ENCODE measurements at regions of chr12 and their contacts with region 1.

Region 1: GRCh38 chr12:77010691-77011548 is 54.4 kb downstream of the E2F7 start:
- DNase-seq: peak; percentile 72 to 86
- H3K4me3 ChIP-seq: no peak overlapping the region
- H3K4me1 ChIP-seq: no peaks in the 10 kb centered on the region
- H3K27me3 ChIP-seq: peaks cover 3% of the 10 kb centered on the region; the same call in 1 of the 2 replicates

Region 2: DNA sequence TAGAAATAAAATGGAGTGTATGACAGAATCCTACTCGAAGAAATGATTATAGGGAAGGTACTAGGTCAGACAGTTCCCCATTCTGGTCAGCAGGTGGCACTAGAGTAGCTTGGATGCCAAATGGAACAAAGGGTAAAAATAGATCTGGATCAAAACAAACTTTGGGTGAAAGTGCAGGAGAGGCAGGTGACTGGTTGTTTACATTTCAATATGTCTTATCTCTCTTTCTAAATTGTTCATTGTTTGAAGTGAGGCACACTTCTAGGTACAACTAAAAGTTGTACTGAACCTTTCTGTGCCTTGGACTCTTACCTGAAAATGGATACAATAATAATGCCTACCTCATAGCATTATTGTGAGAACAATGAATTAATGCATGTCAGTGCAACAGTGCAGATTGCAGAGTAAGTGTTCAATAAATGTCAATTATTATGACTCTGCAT is 389.3 kb before region 1 on chr12:
- in situ Hi-C with region 1: loop called (anchors 25 kb)
- DNase-seq: peak; percentile 77 to 78
- H3K4me3 ChIP-seq: no peak overlapping the region
- H3K4me1 ChIP-seq: no peaks in the 10 kb centered on the region
- H3K27me3 ChIP-seq: no peaks in the 10 kb centered on the region

Region 3: DNA sequence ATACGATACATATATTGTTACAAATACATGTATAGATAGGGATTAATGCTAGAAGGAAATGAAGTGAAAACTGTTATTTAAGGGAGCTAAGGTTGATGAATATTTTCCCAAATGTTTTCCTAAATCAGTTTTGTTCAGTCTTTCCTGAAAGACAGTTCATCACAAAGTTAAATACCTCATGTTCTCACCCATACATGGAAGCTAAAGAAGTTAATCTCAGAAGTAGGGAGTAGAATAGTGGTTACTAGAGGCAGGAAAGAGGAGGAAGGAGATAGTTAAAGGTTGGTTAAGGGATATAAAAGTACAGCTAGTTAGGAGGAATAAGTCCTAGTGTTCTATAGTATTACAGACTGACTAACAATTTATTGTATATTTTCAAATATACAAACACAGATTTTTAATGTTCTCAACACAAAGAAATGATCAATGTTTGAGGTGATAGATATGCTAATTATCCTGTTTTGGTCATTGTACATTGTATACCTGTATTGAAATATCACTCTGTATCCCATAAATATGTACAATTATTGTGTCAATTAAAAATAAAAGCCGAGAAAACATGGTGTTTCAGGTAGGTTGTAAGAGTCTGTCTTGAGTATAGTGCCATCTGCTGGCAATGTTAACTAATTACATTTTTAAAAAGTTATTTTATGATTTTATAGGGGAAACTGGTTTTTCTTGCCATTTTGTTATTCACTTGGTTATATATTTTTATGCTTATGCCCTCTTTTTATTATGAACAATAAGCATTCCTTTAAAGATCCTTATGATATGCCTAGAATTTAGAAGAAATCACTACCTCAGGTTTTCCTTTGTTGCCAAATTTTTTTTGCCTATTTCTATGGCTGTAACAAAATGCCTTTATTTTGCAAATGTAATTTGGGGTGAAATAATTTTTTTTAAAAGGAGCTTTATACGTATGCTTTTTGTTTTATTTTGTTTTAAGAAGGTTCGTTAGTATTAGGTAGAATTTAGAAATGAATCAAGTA is 220.1 kb before region 1 on chr12:
- in situ Hi-C with region 1: no loop called
- DNase-seq: peak in 1 of 2 experiments; percentile 43
- H3K4me3 ChIP-seq: no peak overlapping the region
- H3K4me1 ChIP-seq: peaks cover 9% of the 10 kb centered on the region
- H3K27me3 ChIP-seq: no peaks in the 10 kb centered on the region

Region 4: DNA sequence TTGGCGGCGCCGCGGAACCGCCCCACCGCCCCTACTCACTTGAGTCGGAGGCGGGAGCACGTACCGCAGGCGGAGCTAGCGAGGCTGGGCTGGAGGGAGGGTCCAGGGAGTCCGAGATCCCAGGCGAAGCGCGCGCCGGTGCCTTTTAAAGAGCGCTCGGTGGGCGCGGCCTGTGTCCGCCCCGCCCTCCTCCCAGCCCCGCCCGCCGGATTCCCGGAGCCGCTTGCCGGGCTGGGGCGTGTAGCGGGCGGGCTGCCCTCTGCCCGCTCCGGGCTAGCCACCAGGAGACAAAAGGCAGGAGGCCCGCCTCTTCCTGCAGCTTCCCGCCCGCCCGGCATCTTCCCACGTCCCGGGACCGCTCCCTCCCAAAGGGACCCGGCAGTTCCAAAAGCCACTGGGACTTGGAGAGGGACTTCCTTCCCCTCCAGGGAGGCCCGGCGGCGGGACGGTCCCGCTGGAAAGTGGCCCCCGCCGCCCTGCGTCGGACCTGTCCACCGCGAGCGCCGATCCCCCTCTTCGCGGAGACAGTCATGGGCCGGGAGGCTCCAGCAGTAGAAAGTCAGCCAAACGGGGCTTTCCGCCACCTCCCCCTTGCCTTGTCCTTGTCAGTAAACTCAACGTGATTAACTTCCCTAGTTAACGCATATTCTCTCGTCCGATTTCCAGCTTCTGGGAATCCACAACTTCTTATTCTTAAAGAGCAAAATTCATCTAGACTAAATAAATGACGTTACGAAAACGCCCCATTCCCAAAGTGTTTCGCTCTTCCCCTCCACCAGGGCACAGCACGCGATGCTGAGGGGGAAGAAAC is 131.8 kb before region 1 on chr12 and contains the start of gene CSRP2:
- in situ Hi-C with region 1: no loop called
- DNase-seq: peak; percentile 90 to 95
- H3K4me3 ChIP-seq: peak within 1 kb of the TSS; percentile 64
- H3K4me1 ChIP-seq: peaks cover 12% of the 10 kb centered on the region
- H3K27me3 ChIP-seq: no peaks in the 10 kb centered on the region

Region 5: GRCh38 chr12:77685112-77685511 is 674.2 kb after region 1 on chr12:
- in situ Hi-C with region 1: no loop called
- DNase-seq: peak; percentile 71 to 77
- H3K4me3 ChIP-seq: no peak overlapping the region
- H3K4me1 ChIP-seq: no peaks in the 10 kb centered on the region
- H3K27me3 ChIP-seq: no peaks in the 10 kb centered on the region